Vagina (tissue), 2 donors: ENCODE measurements at regions of chr5 and their contacts with region 1.

Region 1: DNA sequence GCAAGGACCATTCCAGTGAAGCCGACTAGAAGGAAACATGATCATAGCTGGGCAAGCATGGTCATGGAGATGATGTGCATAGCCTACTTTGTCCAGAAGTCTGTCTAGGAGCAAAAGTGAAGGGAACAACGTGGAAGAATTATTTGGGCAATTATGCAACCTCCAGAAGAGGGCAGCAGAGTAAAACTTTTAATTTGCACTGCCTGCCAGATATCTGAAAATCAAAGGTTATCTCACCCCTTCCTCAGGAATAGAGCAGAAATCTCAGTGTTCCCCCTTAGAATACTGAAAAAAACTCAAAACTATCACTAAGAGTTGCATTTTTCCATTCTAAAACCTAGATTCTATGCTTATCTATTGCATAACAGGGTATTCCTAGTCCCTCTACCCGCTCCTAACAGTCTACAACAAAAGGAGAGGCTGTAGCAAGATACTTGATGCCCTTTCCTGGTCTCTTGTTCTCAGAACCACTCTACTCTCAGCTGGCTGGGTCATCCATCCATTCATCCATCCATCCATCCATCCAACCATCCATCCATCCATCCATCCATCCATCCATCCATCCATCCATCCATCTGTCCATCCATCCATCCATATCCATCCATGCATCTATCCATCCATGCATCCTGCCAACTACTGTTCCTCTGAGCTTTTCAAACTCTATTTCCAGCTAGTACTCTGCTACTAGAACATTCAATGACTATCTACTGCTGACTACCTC is 8.4 kb upstream of the SETD9 start:
- DNase-seq: no peak
- H3K4me3 ChIP-seq: no peak overlapping the region
- H3K27ac ChIP-seq: no peak overlapping the region
- H3K4me1 ChIP-seq: no peaks in the 10 kb centered on the region
- H3K27me3 ChIP-seq: no peaks in the 10 kb centered on the region
- CTCF ChIP-seq: peak; percentile 12 to 63 (median 60)
- POLR2A ChIP-seq: no peak

Region 2: GRCh38 chr5:57221049-57221568 is 320.1 kb after region 1 on chr5:
- intact Hi-C with region 1: loop called (anchors 5 kb)
- DNase-seq: no peak
- H3K4me3 ChIP-seq: no peak overlapping the region
- H3K27ac ChIP-seq: no peak overlapping the region
- H3K4me1 ChIP-seq: peaks cover 18% of the 10 kb centered on the region
- H3K27me3 ChIP-seq: no peaks in the 10 kb centered on the region
- CTCF ChIP-seq: peak; percentile 69 to 96 (median 85)
- POLR2A ChIP-seq: no peak